Naive thymus-derived CD4-positive, alpha-beta T cell (primary cell): ENCODE measurements at regions of chr12 and their contacts with region 1.

Region 1: DNA sequence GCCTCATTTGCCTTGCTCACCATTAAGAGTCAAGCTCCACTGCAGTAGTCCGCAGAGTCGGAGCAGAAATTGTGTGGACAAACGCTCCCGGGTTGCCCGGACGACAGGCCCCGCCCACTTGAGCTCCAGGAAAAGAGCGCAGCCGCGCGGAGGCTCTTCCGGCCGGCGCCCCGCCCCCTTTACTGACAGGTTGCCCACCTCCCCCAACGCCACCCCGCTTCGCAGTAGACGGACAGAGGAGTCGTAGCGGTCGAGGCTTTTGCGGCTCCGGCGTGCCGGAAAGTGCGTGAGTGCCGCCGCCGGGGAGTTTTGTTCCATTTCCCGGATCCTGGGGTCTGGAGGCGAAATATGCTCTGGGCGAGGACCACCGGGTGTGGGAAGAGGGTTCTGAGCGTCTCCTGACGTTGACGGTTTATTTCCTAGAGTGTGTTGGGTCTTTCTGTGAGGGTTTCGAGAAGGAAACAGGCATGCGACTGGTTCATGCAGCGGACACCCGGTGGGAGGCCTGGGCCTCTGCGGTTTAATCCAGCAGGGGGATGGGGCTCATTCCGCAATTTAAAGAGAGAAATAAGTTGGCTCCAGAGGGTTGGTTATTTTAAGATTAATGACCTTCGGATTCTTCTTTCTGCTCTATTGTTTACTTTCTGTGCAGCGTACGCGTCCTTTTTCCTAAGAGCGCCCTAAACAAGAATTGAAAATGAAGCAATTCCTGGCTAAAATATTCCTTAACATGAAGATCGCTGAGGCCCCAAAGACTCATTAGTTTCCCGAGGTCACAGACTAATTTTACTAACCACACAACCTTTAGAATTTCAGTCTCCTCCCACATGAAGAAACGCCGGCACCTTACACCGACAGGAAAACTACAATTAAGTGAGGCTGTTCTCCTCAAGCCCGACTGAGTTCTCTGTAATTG is at the starts of genes DNAI7 and ETFRF1:
- DNase-seq: peak; percentile 93 to 98 (median 96)
- ATAC-seq: peak; percentile 99
- H3K4me3 ChIP-seq: peak within 1 kb of the TSS; percentile 90
- H3K4me3 Mint-ChIP-seq: peak within 1 kb of the TSS; percentile 89 to 100 (median 99)
- H3K27ac ChIP-seq: peak within 1 kb of the TSS; percentile 92
- H3K27ac Mint-ChIP-seq: peak within 1 kb of the TSS; percentile 97 to 100 (median 99)
- H3K4me1 ChIP-seq: peaks cover 7 to 8% of the 10 kb centered on the region in 2 donors
- H3K4me1 Mint-ChIP-seq: peaks cover 14 to 59% (median 47%) of the 10 kb centered on the region in 7 donors
- H3K27me3 ChIP-seq: no peaks in the 10 kb centered on the region
- H3K27me3 Mint-ChIP-seq: peaks cover 0 to 3% (median 0%) of the 10 kb centered on the region in 5 donors
- total RNA-seq, gene DNAI7: 0.34 to 0.72 (median 0.50) TPM in 4 of 5 experiments, not detected in the other
- total RNA-seq, gene ETFRF1: 12.9 to 39.5 (median 34.4) TPM

Region 2: DNA sequence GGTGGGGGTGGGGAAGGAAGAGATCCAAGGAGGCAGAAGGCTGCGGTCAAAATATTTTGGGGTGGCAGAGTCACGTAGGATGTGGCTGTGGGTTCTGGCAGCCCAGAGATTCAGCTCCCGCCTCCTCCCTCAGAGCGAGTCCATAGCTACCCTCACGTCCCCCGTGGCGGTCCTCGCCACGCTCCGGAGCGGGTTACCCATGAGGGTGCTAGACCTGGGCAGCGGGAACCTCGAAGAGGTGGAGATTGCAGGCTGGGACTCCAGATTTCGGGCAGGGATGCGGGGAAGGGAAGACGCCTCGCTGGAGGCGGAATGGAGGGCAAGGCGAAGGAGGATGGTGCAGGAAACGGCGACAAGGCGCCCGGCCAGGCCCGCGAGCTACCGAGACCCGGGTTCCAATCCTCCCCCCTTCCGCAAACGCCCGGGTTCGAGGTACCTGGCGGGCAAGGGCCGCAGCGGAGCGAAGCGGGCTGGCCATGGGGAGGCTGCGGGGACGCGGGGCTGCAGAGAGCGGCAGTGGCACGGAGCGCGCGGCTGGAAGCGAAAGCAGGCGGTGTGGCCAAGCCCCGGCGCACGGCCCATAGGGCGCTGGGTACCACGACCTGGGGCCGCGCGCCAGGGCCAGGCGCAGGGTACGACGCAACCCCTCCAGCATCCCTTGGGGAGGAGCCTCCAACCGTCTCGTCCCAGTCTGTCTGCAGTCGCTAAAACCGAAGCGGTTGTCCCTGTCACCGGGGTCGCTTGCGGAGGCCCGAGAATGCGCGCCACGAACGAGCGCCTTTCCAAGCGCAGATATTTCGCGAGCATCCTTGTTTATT is 292.6 kb before region 1 on chr12:
- CTCF ChIA-PET with region 1: no interaction called
- POLR2A ChIA-PET with region 1: no interaction called
- intact Hi-C with region 1: loop called in 1 of 2 experiments (anchors 5 kb)
- DNase-seq: peak in 3 of 9 donors; percentile 5 to 59 (median 7)
- ATAC-seq: peak; percentile 42
- H3K4me3 ChIP-seq: peak overlapping the region; percentile 37
- H3K4me3 Mint-ChIP-seq: peak overlapping the region in 9 of 10 donors; percentile 60 to 99 (median 78)
- H3K27ac ChIP-seq: no peak overlapping the region
- H3K27ac Mint-ChIP-seq: peak overlapping the region in 1 of 9 donors; percentile 96
- H3K4me1 ChIP-seq: no peaks in the 10 kb centered on the region
- H3K4me1 Mint-ChIP-seq: peaks cover 9 to 41% (median 16%) of the 10 kb centered on the region in 7 donors
- H3K27me3 ChIP-seq: no peaks in the 10 kb centered on the region
- H3K27me3 Mint-ChIP-seq: peaks cover 13 to 39% (median 35%) of the 10 kb centered on the region in 5 donors

Region 3: DNA sequence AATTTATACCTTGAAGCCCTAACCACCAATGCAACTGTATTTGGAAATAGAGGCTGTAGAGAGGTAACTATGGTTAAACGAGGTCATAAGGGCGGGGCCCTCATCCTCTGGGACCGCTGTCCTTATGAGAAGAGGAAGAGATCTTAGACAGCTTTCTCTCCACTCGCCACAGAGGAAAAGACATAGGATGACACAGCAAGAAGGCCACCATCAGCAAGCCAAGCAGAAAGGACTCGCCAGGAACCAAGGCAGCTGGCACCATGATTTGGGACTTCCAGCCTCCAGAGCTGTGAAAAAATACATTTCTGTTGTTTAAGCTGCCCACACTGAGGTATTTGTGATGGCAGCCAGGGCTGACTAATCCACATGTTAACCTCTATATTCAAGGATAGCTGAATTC is 216.0 kb before region 1 on chr12:
- CTCF ChIA-PET with region 1: no interaction called
- POLR2A ChIA-PET with region 1: no interaction called
- intact Hi-C with region 1: no loop called
- DNase-seq: no peak
- ATAC-seq: peak; percentile 64
- H3K4me3 ChIP-seq: no peak overlapping the region
- H3K4me3 Mint-ChIP-seq: no peak overlapping the region
- H3K27ac ChIP-seq: no peak overlapping the region
- H3K27ac Mint-ChIP-seq: no peak overlapping the region
- H3K4me1 ChIP-seq: no peaks in the 10 kb centered on the region
- H3K4me1 Mint-ChIP-seq: peaks cover 0 to 3% (median 0%) of the 10 kb centered on the region in 7 donors
- H3K27me3 ChIP-seq: no peaks in the 10 kb centered on the region
- H3K27me3 Mint-ChIP-seq: peaks cover 0 to 15% (median 6%) of the 10 kb centered on the region in 5 donors

Region 4: GRCh38 chr12:25208554-25208953 is 13.2 kb after region 1 on chr12:
- CTCF ChIA-PET with region 1: interaction called, 3 read pairs
- POLR2A ChIA-PET with region 1: interaction called, 6 read pairs
- intact Hi-C with region 1: loop called in 1 of 2 experiments (anchors 1 kb)
- DNase-seq: no peak
- ATAC-seq: no peak
- H3K4me3 ChIP-seq: no peak overlapping the region
- H3K4me3 Mint-ChIP-seq: no peak overlapping the region
- H3K27ac ChIP-seq: no peak overlapping the region
- H3K27ac Mint-ChIP-seq: peak overlapping the region in 1 of 9 donors; percentile 78
- H3K4me1 ChIP-seq: no peaks in the 10 kb centered on the region
- H3K4me1 Mint-ChIP-seq: peaks cover 0 to 30% (median under 1%) of the 10 kb centered on the region in 7 donors
- H3K27me3 ChIP-seq: no peaks in the 10 kb centered on the region
- H3K27me3 Mint-ChIP-seq: no peaks in the 10 kb centered on the region

Region 5: DNA sequence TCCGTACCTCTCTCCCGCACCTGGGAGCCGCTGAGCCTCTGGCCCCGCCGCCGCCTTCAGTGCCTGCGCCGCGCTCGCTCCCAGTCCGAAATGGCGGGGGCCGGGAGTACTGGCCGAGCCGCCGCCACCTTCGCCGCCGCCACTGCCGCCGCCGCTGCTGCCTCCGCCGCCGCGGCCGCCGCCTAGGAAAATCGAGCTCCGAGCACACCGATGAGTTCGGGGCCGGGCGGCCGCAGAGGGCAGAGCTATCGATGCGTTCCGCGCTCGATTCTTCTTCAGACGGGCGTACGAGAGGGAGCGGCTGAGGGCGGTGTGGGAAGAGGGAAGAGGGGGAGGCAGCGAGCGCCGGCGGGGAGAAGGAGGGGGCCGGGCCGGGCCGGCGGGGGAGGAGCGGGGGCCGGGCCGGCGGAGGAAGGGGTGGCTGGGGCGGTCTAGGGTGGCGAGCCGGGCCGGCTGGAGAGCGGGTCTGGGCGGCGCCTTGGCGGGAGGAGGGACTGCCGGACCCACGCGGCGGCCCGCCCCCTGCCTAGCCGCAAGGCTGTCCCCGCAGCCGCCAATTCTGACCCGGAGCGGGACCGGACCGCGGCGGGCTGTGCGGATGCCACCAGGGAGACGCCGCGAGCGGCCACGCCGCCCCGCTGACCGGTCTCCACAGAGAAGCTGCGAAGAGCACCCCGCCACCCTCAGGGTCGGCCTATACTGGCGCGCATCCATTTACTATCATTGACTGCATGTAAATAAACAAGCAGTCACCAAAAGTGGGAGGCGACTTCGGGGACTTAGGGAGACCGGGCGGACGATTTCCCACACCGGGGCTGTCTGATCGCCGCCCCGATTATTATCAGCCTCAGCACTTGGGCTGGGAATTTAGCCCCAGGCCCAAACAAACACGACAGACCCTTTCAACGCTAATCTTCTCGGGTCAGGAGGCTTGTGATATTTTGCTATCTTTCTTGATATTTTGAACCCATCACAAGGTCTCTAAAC is 55.7 kb after region 1 on chr12 and contains the start of gene KRAS:
- CTCF ChIA-PET with region 1: no interaction called
- POLR2A ChIA-PET with region 1: interaction called, 8 read pairs
- intact Hi-C with region 1: loop called (anchors 1 kb)
- DNase-seq: peak; percentile 83 to 90 (median 90)
- ATAC-seq: peak; percentile 96
- H3K4me3 ChIP-seq: peak within 1 kb of the TSS; percentile 64
- H3K4me3 Mint-ChIP-seq: peak within 1 kb of the TSS; percentile 84 to 97 (median 94)
- H3K27ac ChIP-seq: peak within 1 kb of the TSS; percentile 91
- H3K27ac Mint-ChIP-seq: peak within 1 kb of the TSS; percentile 84 to 96 (median 94)
- H3K4me1 ChIP-seq: peaks cover 0 to 5% of the 10 kb centered on the region in 2 donors
- H3K4me1 Mint-ChIP-seq: peaks cover 16 to 51% (median 44%) of the 10 kb centered on the region in 7 donors
- H3K27me3 ChIP-seq: no peaks in the 10 kb centered on the region
- H3K27me3 Mint-ChIP-seq: peaks cover 0 to 20% (median 0%) of the 10 kb centered on the region in 5 donors
- total RNA-seq, gene KRAS: 33.1 to 39.9 (median 35.7) TPM

Region 6: GRCh38 chr12:25269701-25270100 is 74.4 kb after region 1 on chr12:
- CTCF ChIA-PET with region 1: no interaction called
- POLR2A ChIA-PET with region 1: no interaction called
- intact Hi-C with region 1: no loop called
- DNase-seq: no peak
- ATAC-seq: peak; percentile 56
- H3K4me3 ChIP-seq: no peak overlapping the region
- H3K4me3 Mint-ChIP-seq: no peak overlapping the region
- H3K27ac ChIP-seq: no peak overlapping the region
- H3K27ac Mint-ChIP-seq: no peak overlapping the region
- H3K4me1 ChIP-seq: no peaks in the 10 kb centered on the region
- H3K4me1 Mint-ChIP-seq: peaks cover 0 to 4% (median 0%) of the 10 kb centered on the region in 7 donors
- H3K27me3 ChIP-seq: no peaks in the 10 kb centered on the region
- H3K27me3 Mint-ChIP-seq: no peaks in the 10 kb centered on the region

Region 7: GRCh38 chr12:25328072-25328712 is 132.9 kb after region 1 on chr12:
- CTCF ChIA-PET with region 1: no interaction called
- POLR2A ChIA-PET with region 1: no interaction called
- intact Hi-C with region 1: no loop called
- DNase-seq: no peak
- ATAC-seq: no peak
- H3K4me3 ChIP-seq: no peak overlapping the region
- H3K4me3 Mint-ChIP-seq: no peak overlapping the region
- H3K27ac ChIP-seq: no peak overlapping the region
- H3K27ac Mint-ChIP-seq: no peak overlapping the region
- H3K4me1 ChIP-seq: peaks cover 6 to 11% of the 10 kb centered on the region in 2 donors
- H3K4me1 Mint-ChIP-seq: peaks cover 10 to 20% (median 16%) of the 10 kb centered on the region in 7 donors
- H3K27me3 ChIP-seq: no peaks in the 10 kb centered on the region
- H3K27me3 Mint-ChIP-seq: peaks cover 0 to 29% (median 0%) of the 10 kb centered on the region in 5 donors

Region 8: GRCh38 chr12:26113853-26114719 is 918.8 kb after region 1 on chr12:
- CTCF ChIA-PET with region 1: no interaction called
- POLR2A ChIA-PET with region 1: no interaction called
- intact Hi-C with region 1: loop called in 1 of 2 experiments (anchors 1 kb)
- DNase-seq: peak; percentile 48 to 70 (median 65)
- ATAC-seq: peak; percentile 88
- H3K4me3 ChIP-seq: peak overlapping the region; percentile 53
- H3K4me3 Mint-ChIP-seq: peak overlapping the region; percentile 72 to 90 (median 82)
- H3K27ac ChIP-seq: peak overlapping the region; percentile 54
- H3K27ac Mint-ChIP-seq: peak overlapping the region in 7 of 9 donors; percentile 44 to 83 (median 63)
- H3K4me1 ChIP-seq: peaks cover 0 to 5% of the 10 kb centered on the region in 2 donors
- H3K4me1 Mint-ChIP-seq: peaks cover 5 to 14% (median 8%) of the 10 kb centered on the region in 7 donors
- H3K27me3 ChIP-seq: no peaks in the 10 kb centered on the region
- H3K27me3 Mint-ChIP-seq: peaks cover 2 to 80% (median 32%) of the 10 kb centered on the region in 5 donors